Activated CD8-positive, alpha-beta memory T cell treated with anti-CD3 and anti-CD28 coated beads, Interleukin-2, amount 10 ng/mL, durations not matched to agents 7 days and 5 days (primary cell): ENCODE measurements at regions of chr11 and their contacts with region 1.

Region 1: DNA sequence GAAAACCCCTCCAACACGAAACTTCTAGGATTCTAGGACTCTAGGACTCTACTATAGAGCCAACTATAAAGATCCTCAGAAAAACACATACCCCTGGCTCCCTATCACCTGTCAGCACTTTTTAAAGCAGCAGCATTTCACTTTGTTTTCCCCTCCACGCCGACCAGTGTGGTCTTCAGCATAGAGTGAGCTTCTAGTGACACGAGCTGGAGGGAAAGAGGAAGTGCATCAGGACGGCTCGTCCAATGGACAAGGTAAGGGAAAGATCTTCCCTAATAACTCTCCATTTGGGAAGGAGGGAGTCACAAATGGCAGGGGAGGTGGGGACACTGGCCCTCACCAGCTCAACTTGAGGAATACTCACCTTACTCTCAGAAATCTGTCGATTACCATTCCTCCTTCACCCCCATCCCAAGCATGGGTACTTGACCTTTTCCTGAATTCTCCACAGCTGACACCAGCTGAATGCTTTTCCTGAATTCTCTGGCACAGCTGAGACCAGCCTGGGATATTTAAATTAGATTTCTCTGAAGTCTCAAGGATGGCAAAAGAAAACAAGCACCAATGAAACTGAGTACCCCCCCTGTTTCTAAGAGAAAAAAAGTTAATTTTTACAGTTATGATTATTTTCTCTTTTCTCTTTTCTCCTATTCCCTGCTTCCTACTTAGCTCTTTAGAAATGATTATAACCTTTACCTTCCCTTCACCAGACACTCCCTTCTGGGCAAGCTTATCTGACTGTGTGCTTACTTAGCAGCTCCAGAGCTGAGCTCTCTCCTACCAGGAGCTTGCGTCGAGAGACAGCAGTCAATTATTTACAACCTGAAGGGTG is 33.3 kb upstream of the NNMT start:
- DNase-seq: peak; percentile 50
- ATAC-seq: peak; percentile 65
- H3K4me3 Mint-ChIP-seq: no peak overlapping the region
- H3K27ac Mint-ChIP-seq: no peak overlapping the region
- H3K4me1 Mint-ChIP-seq: no peaks in the 10 kb centered on the region
- H3K27me3 Mint-ChIP-seq: no peaks in the 10 kb centered on the region

Region 2: DNA sequence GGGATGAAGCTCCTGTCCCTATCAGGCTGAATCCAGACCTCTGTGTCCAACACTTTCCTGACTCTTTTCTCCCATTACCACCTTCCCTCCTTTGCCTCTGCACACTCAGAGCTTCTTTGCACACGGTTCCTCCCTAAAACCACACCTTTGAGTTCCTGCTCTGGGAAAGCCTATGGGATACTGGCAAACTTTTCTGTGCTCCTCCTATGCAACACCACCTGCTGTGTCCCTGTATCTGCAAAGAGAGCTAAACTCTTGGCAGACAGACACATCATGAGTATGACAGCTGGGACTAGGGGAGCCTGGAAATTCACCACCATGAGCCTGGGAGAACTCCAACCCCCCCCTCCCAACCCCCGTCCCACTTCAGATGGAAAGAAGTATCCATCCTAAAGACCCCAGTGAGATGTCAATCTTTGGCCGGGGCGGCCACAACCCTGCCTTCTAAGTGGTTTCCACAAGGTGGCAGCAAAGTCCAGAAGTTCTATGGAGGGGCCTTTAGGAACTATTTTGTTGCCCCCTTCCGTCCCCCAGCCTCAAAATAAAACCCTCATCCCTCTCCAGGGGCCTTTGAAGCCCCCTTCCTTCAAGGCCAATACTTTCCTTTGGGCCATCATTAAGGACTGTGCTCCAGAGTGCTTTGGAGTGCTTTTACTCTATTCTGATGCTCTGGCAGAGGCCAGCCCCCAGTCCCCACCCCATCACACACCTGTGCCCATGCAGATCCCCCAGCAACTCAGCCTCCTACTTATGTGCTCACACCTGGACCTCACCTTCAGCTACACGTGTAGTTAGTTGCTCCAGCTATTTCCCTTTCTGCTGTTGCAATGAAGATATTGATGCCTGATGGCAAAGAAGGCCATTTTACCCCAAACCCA is 268.6 kb before region 1 on chr11:
- CTCF ChIA-PET with region 1: interaction called, 133 read pairs
- DNase-seq: no peak
- ATAC-seq: peak; percentile 47
- H3K4me3 Mint-ChIP-seq: no peak overlapping the region
- H3K27ac Mint-ChIP-seq: no peak overlapping the region
- H3K4me1 Mint-ChIP-seq: no peaks in the 10 kb centered on the region
- H3K27me3 Mint-ChIP-seq: peaks cover 24% of the 10 kb centered on the region

Region 3: DNA sequence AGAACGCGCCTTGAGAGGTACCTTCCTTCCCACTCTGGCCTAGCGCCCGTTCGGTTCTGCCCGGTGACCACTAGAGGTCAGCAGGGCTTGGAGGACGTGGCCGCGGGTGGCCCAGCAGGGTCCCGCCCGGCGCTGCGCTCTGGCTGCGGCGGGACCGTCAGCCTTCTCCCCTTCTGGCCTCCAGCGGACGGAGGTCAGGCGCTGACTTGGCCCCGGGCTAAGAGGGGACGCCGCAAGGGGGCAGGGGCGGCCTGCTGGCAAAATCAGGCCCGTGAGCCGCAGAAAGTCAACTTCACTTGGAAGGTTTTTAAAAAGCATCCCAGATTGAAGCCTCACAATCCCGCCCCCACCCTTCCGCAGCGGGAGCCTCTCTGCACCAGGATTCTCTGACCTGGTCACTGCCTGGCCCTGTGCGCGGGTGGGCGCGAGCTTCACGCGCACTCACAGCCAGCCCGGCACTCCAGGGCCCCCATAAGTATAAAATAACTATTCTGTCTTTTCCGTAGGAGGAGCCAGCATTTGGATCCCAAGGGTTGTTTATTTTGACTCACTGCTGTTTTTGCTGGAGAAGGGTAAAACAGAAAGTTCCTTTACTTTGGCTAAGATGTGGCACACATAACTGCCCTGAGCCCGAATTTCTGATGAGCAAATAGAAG is 226.6 kb before region 1 on chr11:
- CTCF ChIA-PET with region 1: interaction called, 99 read pairs
- DNase-seq: peak; percentile 64
- ATAC-seq: peak; percentile 81
- H3K4me3 Mint-ChIP-seq: no peak overlapping the region
- H3K27ac Mint-ChIP-seq: no peak overlapping the region
- H3K4me1 Mint-ChIP-seq: peaks cover 3% of the 10 kb centered on the region
- H3K27me3 Mint-ChIP-seq: peaks cover 25% of the 10 kb centered on the region

Region 4: GRCh38 chr11:114082767-114083181 is 180.1 kb before region 1 on chr11:
- CTCF ChIA-PET with region 1: interaction called, 10 read pairs
- DNase-seq: no peak
- ATAC-seq: no peak
- H3K4me3 Mint-ChIP-seq: no peak overlapping the region
- H3K27ac Mint-ChIP-seq: no peak overlapping the region
- H3K4me1 Mint-ChIP-seq: peaks cover 47% of the 10 kb centered on the region
- H3K27me3 Mint-ChIP-seq: peaks cover 16% of the 10 kb centered on the region

Region 5: DNA sequence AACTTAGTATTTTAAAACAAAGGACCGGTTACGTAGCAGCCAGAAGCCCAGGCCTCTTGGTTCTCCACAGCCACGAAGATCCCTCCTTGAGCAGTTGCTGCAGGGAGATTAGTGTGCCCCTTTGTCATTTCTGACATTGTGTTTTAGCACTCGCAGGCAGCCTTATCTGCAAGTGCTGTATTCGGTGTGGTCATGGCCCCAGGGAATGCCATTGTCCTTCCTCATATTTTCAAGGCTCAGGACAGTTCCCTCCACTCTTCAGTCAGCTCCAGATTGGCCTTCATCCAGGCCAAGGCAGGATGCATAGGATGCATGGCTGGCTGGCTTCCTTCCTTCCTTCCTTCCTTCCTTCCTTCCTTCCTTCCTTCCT is 114.9 kb before region 1 on chr11:
- CTCF ChIA-PET with region 1: no interaction called
- DNase-seq: no peak
- ATAC-seq: no peak
- H3K4me3 Mint-ChIP-seq: no peak overlapping the region
- H3K27ac Mint-ChIP-seq: no peak overlapping the region
- H3K4me1 Mint-ChIP-seq: peaks cover 9% of the 10 kb centered on the region
- H3K27me3 Mint-ChIP-seq: peaks cover 5% of the 10 kb centered on the region

Region 6: DNA sequence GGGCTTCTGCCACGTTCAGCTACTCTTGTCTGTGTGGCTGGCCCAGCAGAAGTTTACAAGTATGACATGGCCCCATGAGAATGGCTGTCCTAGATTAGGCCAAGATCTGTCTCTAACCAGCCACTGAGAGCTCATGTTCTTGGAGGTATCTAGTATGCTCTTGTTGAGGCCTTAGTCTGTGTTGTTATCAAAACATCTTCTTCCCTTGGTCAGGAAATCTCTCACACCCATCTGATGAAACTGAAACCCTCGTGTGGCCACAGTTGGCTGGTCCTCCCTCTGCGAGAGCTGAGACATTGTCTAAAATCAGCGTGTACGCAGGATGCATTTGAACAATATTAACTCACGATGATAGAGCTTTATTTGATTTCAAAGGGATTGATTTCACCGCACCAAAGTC is 75.7 kb before region 1 on chr11:
- CTCF ChIA-PET with region 1: interaction called, 14 read pairs
- DNase-seq: peak; percentile 53
- ATAC-seq: peak; percentile 34
- H3K4me3 Mint-ChIP-seq: no peak overlapping the region
- H3K27ac Mint-ChIP-seq: peak overlapping the region; percentile 73
- H3K4me1 Mint-ChIP-seq: peaks cover 63% of the 10 kb centered on the region
- H3K27me3 Mint-ChIP-seq: no peaks in the 10 kb centered on the region

Region 7: GRCh38 chr11:114215871-114216795 is 46.8 kb before region 1 on chr11:
- CTCF ChIA-PET with region 1: interaction called, 21 read pairs
- DNase-seq: no peak
- ATAC-seq: peak; percentile 35
- H3K4me3 Mint-ChIP-seq: peak overlapping the region; percentile 30
- H3K27ac Mint-ChIP-seq: peak overlapping the region; percentile 82
- H3K4me1 Mint-ChIP-seq: peaks cover 43% of the 10 kb centered on the region
- H3K27me3 Mint-ChIP-seq: no peaks in the 10 kb centered on the region